Natural killer cell (primary cell): ENCODE measurements at regions of chr1 and their contacts with region 1.

Region 1: GRCh38 chr1:84506002-84506728 is at the starts of genes GNG5 and SPATA1:
- DNase-seq: peak; percentile 95 to 99
- ATAC-seq: peak; percentile 83 to 95 (median 88)
- H3K4me3 ChIP-seq: peak within 1 kb of the TSS; percentile 92
- H3K4me3 Mint-ChIP-seq: peak within 1 kb of the TSS; percentile 97
- H3K27ac ChIP-seq: peak within 1 kb of the TSS; percentile 98
- H3K27ac Mint-ChIP-seq: peak within 1 kb of the TSS; percentile 91 to 93
- H3K4me1 ChIP-seq: peaks cover 5% of the 10 kb centered on the region
- H3K4me1 Mint-ChIP-seq: peaks cover 34 to 49% of the 10 kb centered on the region in 2 donors
- H3K27me3 ChIP-seq: no peaks in the 10 kb centered on the region
- H3K27me3 Mint-ChIP-seq: no peaks in the 10 kb centered on the region
- CTCF ChIP-seq: no peak
- total RNA-seq, gene GNG5: 49.5 to 62.3 (median 57.5) TPM
- total RNA-seq, gene SPATA1: 0.63 to 4.1 (median 2.1) TPM

Region 2: DNA sequence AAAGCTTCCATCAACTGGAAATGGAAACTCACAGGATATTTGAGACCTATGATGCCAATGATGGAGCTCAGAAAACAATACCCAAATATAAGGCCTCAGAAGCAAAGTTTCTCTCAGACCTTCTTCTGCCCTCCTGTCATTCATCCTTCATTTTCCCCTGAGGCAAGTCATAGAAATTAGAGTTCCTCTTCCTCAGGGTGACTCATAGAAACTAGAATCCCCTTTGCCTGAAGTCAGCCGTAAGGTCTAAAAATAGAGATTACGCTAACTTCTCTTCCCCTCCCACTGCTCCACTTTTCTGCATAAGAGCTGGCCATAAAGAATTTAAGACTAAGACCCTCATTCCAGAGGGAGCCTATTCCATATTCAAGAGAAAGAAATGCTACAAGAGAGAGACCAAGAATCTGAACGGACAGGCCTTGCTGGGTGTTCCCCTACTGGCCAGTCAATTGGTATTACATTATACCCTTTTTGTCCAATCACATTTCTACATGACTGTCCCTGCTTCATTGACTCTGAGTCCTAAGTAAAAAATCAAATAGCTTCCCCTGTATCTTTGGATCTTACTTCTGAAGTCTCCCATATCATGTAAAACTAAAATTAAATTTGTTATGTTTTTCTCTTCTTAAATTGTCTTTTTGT is 1710.5 kb before region 1 on chr1:
- intact Hi-C with region 1: no loop called
- DNase-seq: no peak
- ATAC-seq: no peak
- H3K4me3 ChIP-seq: no peak overlapping the region
- H3K4me3 Mint-ChIP-seq: no peak overlapping the region
- H3K27ac ChIP-seq: no peak overlapping the region
- H3K27ac Mint-ChIP-seq: no peak overlapping the region
- H3K4me1 ChIP-seq: no peaks in the 10 kb centered on the region
- H3K4me1 Mint-ChIP-seq: no peaks in the 10 kb centered on the region
- H3K27me3 ChIP-seq: no peaks in the 10 kb centered on the region
- H3K27me3 Mint-ChIP-seq: no peaks in the 10 kb centered on the region
- CTCF ChIP-seq: no peak

Region 3: DNA sequence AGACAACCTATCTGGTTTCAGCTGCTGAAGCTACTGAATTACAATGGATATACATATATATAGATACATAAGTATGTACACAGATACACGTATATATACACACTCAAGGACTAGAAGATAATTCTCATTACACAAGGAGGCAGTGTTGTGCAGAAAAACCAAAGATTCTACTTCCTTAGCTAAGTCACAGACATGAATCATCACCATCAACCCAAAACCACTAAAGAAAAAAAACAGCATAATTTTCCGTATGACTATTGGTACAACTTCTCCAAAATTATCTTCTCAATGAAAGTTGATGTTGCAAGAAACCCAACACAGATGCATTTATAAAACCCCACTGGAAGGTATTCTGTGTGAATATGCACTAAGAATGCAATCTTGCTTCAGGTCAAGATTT is 63.9 kb before region 1 on chr1:
- intact Hi-C with region 1: loop called (anchors 2 kb)
- DNase-seq: peak in 1 of 2 donors; percentile 87
- ATAC-seq: peak; percentile 98 to 99 (median 99)
- H3K4me3 ChIP-seq: no peak overlapping the region
- H3K4me3 Mint-ChIP-seq: peak overlapping the region; percentile 66
- H3K27ac ChIP-seq: no peak overlapping the region
- H3K27ac Mint-ChIP-seq: peak overlapping the region; percentile 49 to 60
- H3K4me1 ChIP-seq: peaks cover 20% of the 10 kb centered on the region
- H3K4me1 Mint-ChIP-seq: peaks cover 7 to 10% of the 10 kb centered on the region in 2 donors
- H3K27me3 ChIP-seq: no peaks in the 10 kb centered on the region
- H3K27me3 Mint-ChIP-seq: peaks cover 11% of the 10 kb centered on the region in 2 donors
- CTCF ChIP-seq: peak; percentile 65

Region 4: GRCh38 chr1:84478876-84479868 is 27.0 kb before region 1 on chr1 and contains the start of gene RPF1:
- intact Hi-C with region 1: loop called (anchors 1 kb)
- DNase-seq: peak; percentile 70 to 88
- ATAC-seq: peak; percentile 94 to 96 (median 95)
- H3K4me3 ChIP-seq: peak within 1 kb of the TSS; percentile 71
- H3K4me3 Mint-ChIP-seq: peak within 1 kb of the TSS; percentile 100
- H3K27ac ChIP-seq: peak within 1 kb of the TSS; percentile 79
- H3K27ac Mint-ChIP-seq: peak within 1 kb of the TSS; percentile 99 to 100
- H3K4me1 ChIP-seq: peaks cover 13% of the 10 kb centered on the region
- H3K4me1 Mint-ChIP-seq: peaks cover 44 to 46% of the 10 kb centered on the region in 2 donors
- H3K27me3 ChIP-seq: peaks cover 5% of the 10 kb centered on the region
- H3K27me3 Mint-ChIP-seq: peaks cover 24 to 40% of the 10 kb centered on the region in 2 donors
- CTCF ChIP-seq: no peak
- total RNA-seq, gene RPF1: 50.0 to 53.0 (median 50.0) TPM

Region 5: DNA sequence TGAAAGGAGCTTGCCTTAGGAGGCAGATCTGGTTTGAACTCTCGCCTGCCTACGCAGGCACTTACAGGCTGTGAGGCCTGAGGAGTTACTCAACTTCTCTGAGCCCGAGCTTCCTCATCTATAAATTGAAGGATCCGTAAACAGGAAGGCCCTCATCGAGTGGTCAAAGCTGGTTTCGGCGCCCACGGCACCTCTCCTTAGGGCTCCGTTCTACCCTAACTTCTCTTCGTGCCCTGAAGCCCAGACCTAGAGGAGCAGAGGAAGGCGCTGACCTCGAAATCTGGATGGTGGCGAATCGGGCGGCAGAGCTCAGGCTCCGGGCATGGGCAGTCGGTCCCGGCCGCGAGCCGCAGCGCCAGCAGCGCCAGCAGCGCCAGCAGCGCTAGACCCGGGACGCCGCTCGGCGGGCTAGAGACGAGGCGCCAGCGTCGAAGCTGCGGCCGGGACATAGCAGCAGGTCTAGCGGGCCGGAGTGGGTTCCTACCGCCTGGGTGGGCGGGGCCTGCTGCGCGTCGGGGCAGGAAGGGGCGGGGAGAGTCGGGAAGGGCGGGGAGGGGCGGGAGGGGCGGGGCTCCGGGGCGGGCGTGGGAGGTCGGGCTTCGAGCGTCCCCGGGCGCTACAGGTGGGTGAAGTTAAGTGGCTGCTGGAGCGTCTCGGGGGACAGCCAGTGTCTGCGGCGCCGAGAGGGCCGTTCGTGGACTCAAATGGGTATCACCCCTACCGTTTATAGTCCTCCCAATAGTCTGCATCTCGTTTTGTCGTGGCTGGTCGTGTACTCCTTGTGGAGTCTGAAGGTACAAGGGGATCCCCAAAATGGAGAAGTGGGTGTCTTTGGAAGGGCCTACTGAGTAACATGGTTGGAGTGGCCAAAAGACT is 68.0 kb after region 1 on chr1 and contains the start of gene CTBS:
- intact Hi-C with region 1: loop called (anchors 1 kb)
- DNase-seq: peak; percentile 80 to 94
- ATAC-seq: peak; percentile 95 to 99 (median 97)
- H3K4me3 ChIP-seq: peak within 1 kb of the TSS; percentile 72
- H3K4me3 Mint-ChIP-seq: peak within 1 kb of the TSS; percentile 93
- H3K27ac ChIP-seq: peak within 1 kb of the TSS; percentile 93
- H3K27ac Mint-ChIP-seq: peak within 1 kb of the TSS; percentile 98 to 99
- H3K4me1 ChIP-seq: peaks cover 16% of the 10 kb centered on the region
- H3K4me1 Mint-ChIP-seq: peaks cover 41 to 44% of the 10 kb centered on the region in 2 donors
- H3K27me3 ChIP-seq: no peaks in the 10 kb centered on the region
- H3K27me3 Mint-ChIP-seq: no peaks in the 10 kb centered on the region
- CTCF ChIP-seq: no peak
- total RNA-seq, gene CTBS: 14.4 to 19.9 (median 17.1) TPM

Region 6: DNA sequence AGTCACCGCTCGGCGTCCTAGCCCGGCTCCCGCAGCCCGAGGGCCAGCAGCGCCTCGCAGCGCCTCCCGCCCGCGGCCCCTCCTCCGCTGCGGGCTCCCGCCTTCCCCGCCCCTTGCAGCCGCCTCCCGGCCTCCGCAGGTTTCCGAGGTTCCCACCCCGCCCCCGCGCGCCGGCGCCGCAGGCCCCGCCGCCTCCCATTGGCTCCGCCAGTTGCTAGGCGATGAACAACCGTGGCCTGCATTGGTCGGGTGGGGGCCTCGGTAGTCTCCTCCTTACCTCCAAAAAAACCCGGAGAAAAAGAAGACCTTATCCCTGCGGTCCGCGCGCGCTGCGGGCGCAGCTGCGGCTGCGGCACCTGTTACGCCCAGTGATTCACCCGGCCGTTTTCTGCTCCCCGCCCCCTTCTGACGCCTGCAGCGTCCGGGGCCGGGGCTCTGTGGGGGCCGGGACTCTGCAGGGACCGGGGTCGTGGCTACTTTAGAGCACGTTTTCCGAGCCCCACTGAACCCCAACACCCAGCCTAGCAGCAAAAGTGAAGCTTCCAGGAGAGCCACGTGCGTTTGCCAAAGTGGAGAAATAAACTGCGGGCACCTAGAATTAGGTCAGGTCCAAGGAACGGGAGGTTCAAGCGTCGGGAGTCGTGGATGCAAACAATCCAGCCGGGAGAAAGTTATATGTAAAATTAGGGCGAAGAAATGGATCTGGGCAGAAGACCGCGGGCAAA is 184.4 kb after region 1 on chr1 and contains the start of gene SSX2IP:
- intact Hi-C with region 1: loop called (anchors 1 kb)
- DNase-seq: peak; percentile 98 to 99
- ATAC-seq: peak; percentile 75 to 94 (median 87)
- H3K4me3 ChIP-seq: peak within 1 kb of the TSS; percentile 60
- H3K4me3 Mint-ChIP-seq: peak within 1 kb of the TSS; percentile 97
- H3K27ac ChIP-seq: peak within 1 kb of the TSS; percentile 85
- H3K27ac Mint-ChIP-seq: peak within 1 kb of the TSS; percentile 99
- H3K4me1 ChIP-seq: peaks cover 23% of the 10 kb centered on the region
- H3K4me1 Mint-ChIP-seq: peaks cover 62 to 67% of the 10 kb centered on the region in 2 donors
- H3K27me3 ChIP-seq: no peaks in the 10 kb centered on the region
- H3K27me3 Mint-ChIP-seq: no peaks in the 10 kb centered on the region
- CTCF ChIP-seq: no peak
- total RNA-seq, gene SSX2IP: 24.2 to 35.8 (median 27.2) TPM